HEK293 (cell line): ENCODE measurements at regions of chr22 and their contacts with region 1.

Region 1: GRCh38 chr22:37538590-37539357 is 19.6 kb upstream of the CARD10 start:
- H3K4me3 ChIP-seq: no peak overlapping the region
- H3K27ac ChIP-seq: no peak overlapping the region; the same call in 1 of the 2 replicates
- H3K4me1 ChIP-seq: peaks cover 7% of the 10 kb centered on the region
- CTCF ChIP-seq: peak; percentile 100

Region 2: DNA sequence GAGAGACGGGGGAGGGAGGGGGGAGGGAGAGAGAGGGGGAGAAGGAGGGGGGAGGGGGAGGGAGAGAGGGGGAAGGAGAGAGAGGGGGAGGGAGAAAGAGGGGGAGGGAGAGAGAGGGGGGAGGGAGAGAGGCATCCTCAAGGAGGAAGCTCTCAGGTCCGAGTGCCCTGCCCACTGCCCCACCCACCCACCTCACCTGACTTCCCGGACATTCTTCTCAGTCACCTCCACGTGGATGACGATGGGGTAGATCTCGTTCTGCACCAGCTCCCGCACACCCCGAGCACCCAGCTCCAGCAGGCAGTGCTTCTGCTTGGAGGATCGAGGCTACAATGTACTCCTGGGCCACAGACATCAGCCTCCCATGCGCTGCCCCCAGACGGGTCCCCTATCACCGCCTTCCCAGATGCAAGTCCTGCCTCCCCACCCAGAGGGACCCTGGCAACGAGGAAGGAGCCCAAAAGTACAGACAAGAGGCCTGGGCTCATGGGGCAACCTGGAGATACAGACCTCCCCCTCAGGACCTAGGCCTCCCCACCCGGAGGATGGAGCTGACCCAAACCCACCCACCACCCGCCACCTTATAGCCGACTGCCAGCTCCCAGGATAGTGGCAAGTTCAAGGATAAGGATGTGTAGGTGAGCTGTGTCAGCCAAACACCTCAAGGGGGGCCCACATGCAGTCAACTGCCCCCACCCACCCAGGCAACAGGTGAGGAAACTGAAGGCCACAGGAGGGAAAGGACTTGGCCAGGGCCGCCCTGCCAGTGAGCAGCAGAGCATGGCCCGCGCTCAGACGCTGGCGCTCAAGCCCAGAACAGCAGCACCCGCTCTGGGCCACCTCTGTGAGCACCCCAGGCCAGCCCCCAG is 47.0 kb before region 1 on chr22:
- CTCF ChIA-PET with region 1: no interaction called
- POLR2A ChIA-PET with region 1: no interaction called
- H3K4me3 ChIP-seq: no peak overlapping the region
- H3K27ac ChIP-seq: no peak overlapping the region
- H3K4me1 ChIP-seq: no peaks in the 10 kb centered on the region
- CTCF ChIP-seq: no peak

Region 3: GRCh38 chr22:37552524-37553163 is 13.9 kb after region 1 on chr22:
- CTCF ChIA-PET with region 1: interaction called, 26 read pairs
- POLR2A ChIA-PET with region 1: interaction called, 3 read pairs
- H3K4me3 ChIP-seq: no peak overlapping the region
- H3K27ac ChIP-seq: no peak overlapping the region
- H3K4me1 ChIP-seq: no peaks in the 10 kb centered on the region
- CTCF ChIP-seq: no peak

Region 4: GRCh38 chr22:37601540-37602442 is 63.0 kb after region 1 on chr22:
- CTCF ChIA-PET with region 1: interaction called, 287 read pairs
- POLR2A ChIA-PET with region 1: interaction called, 3 read pairs
- H3K4me3 ChIP-seq: no peak overlapping the region
- H3K27ac ChIP-seq: no peak overlapping the region
- H3K4me1 ChIP-seq: peaks cover 4% of the 10 kb centered on the region; the same call in 1 of the 2 replicates
- CTCF ChIP-seq: no peak